ENCODE measurements at regions of chr18 and their contacts with region 1.

Region 1: GRCh38 chr18:48675352-48675761 is 136.5 kb downstream of the CTIF start:
- DNase-seq: peak; percentile 40
- H3K4me3 ChIP-seq: no peak overlapping the region
- CTCF ChIP-seq: peak; percentile 98

Region 2: GRCh38 chr18:48488388-48488850 is 186.9 kb before region 1 on chr18:
- CTCF ChIA-PET with region 1: interaction called, 12 read pairs
- POLR2A ChIA-PET with region 1: no interaction called
- DNase-seq: peak; percentile 73
- H3K4me3 ChIP-seq: no peak overlapping the region
- CTCF ChIP-seq: no peak

Region 3: GRCh38 chr18:48640541-48641270 is 34.7 kb before region 1 on chr18:
- CTCF ChIA-PET with region 1: no interaction called
- POLR2A ChIA-PET with region 1: no interaction called
- DNase-seq: no peak
- H3K4me3 ChIP-seq: no peak overlapping the region
- CTCF ChIP-seq: no peak

Region 4: GRCh38 chr18:48687346-48688042 is 12.1 kb after region 1 on chr18:
- CTCF ChIA-PET with region 1: interaction called, 44 read pairs
- POLR2A ChIA-PET with region 1: no interaction called
- DNase-seq: no peak
- H3K4me3 ChIP-seq: no peak overlapping the region
- CTCF ChIP-seq: no peak

Region 5: GRCh38 chr18:48693625-48694262 is 18.4 kb after region 1 on chr18:
- CTCF ChIA-PET with region 1: interaction called, 44 read pairs
- POLR2A ChIA-PET with region 1: no interaction called
- DNase-seq: no peak
- H3K4me3 ChIP-seq: no peak overlapping the region
- CTCF ChIP-seq: no peak

Region 6: GRCh38 chr18:48725562-48725961 is 50.2 kb after region 1 on chr18:
- CTCF ChIA-PET with region 1: no interaction called
- POLR2A ChIA-PET with region 1: no interaction called
- DNase-seq: no peak
- H3K4me3 ChIP-seq: no peak overlapping the region
- CTCF ChIP-seq: no peak

Region 7: GRCh38 chr18:49178736-49179135 is 503.4 kb after region 1 on chr18:
- CTCF ChIA-PET with region 1: interaction called, 10 read pairs
- POLR2A ChIA-PET with region 1: no interaction called
- DNase-seq: no peak
- H3K4me3 ChIP-seq: no peak overlapping the region
- CTCF ChIP-seq: peak; percentile 54

Region 8: GRCh38 chr18:49238433-49239042 is 563.2 kb after region 1 on chr18:
- CTCF ChIA-PET with region 1: interaction called, 52 read pairs
- POLR2A ChIA-PET with region 1: no interaction called
- DNase-seq: no peak
- H3K4me3 ChIP-seq: no peak overlapping the region
- CTCF ChIP-seq: peak; percentile 38

Measured in AG04449 (cell line).